HEK293 (cell line): ENCODE measurements at regions of chr10 and their contacts with region 1.

Region 1: GRCh38 chr10:47361293-47361692 is 13.1 kb downstream of the RBP3 start:
- H3K4me3 ChIP-seq: no peak overlapping the region
- H3K27ac ChIP-seq: no peak overlapping the region
- H3K4me1 ChIP-seq: no peaks in the 10 kb centered on the region
- CTCF ChIP-seq: peak; percentile 58

Region 2: DNA sequence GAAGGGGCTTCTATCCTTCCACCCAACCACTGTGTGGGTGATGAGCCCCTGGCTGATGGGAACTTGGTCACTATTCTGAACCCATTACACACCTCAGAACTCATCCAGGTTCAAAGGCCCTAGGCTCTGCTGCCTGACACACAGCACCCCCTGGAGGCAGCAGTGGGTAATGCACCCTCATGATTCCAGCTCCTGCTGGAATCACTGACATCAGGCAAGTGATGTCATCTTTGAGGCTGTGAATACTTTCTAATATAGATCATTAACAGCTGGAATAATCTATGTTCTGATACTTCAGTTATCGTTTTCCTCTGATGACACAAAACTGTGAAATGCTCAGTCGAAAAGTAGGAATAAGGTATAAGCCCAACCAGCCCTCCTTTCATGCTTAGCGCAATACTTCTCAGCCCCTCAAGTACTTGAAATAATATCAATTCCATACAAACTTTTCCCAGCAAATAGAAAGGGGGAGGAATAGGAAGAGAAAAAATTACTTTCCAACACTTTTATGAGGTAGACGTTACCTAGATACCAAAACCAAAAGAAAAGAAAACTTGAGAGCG is 20.6 kb before region 1 on chr10:
- CTCF ChIA-PET with region 1: interaction called, 10 read pairs
- POLR2A ChIA-PET with region 1: no interaction called
- H3K4me3 ChIP-seq: no peak overlapping the region
- H3K27ac ChIP-seq: no peak overlapping the region
- H3K4me1 ChIP-seq: no peaks in the 10 kb centered on the region
- CTCF ChIP-seq: peak; percentile 72

Region 3: DNA sequence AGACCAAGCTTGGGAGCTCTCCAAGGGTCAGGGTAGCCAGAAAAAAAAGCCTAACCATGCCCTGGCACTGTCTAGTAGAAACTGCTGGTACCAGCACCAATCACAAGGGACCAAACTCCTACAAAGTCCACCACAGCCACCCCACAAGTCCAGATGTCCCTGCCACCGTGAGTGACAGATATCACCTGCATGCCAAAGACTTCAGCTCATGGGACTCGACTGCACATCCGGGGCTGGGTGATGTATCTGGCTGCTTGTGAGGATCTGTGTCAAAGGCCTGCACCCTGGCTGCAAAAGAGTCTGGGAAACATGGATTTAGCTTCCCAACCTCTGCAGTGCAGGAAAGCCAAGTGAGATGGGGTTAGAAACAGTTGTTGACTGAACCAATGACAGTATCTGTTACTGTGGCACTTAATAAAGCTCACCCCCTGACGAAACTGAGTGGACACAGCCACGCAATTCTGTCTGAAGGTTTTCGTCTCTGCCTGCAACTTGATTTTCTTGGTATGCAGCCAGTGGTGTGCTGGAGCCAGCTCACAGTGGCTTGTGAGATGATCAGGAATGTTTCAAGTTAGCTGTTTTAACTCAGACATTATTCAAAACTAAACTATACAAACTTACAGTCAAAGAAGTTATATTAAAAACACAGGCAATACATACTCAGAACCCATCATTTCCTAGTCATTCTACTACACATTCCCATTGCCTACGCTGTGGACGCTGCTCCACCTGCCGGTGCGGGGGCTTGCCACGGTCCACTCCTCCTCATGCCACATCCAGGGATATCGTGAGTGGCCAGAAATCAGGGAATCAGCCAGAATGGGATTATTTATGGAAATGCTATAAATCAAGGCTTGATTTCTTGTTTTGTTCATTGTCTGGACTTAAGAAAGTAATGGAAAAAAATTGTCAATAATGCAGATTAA is 13.6 kb after region 1 on chr10:
- CTCF ChIA-PET with region 1: interaction called, 19 read pairs
- POLR2A ChIA-PET with region 1: no interaction called
- H3K4me3 ChIP-seq: no peak overlapping the region
- H3K27ac ChIP-seq: no peak overlapping the region
- H3K4me1 ChIP-seq: peaks cover 3% of the 10 kb centered on the region; the same call in 1 of the 2 replicates
- CTCF ChIP-seq: no peak

Region 4: DNA sequence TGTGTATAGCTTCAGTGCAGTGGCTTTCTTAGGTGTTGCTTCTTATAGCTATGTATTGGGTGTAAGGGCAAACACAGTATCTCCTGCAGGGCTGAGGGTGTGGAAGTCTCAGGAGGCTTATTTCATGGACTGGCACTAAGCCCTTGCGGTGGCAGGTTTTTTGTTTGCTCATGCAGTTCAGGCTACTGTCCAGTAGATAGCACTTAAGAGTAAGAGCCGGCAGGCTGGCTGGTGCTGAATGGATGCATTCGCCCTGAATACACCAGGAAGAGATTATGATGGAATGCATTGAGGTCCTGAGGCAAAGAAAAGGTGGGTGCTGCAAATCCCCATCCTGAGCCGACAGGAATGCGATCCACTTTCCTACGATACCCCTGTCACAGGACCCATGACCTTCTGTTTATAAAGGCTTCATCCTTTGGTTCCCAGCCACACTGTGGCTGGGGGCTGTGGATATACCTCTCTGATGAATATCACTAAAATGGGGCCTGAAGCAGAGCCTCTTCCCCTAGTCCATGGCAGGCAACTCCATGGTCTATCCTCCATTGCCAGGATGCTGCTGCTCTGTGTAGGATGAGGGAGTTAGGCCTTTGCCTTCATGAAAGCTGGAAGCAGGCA is 77.7 kb after region 1 on chr10:
- CTCF ChIA-PET with region 1: interaction called, 12 read pairs
- POLR2A ChIA-PET with region 1: no interaction called
- H3K4me3 ChIP-seq: no peak overlapping the region
- H3K27ac ChIP-seq: no peak overlapping the region
- H3K4me1 ChIP-seq: no peaks in the 10 kb centered on the region
- CTCF ChIP-seq: no peak